Left cardiac atrium (tissue), 4 donors: ENCODE measurements at regions of chr22 and their contacts with region 1.

Region 1: DNA sequence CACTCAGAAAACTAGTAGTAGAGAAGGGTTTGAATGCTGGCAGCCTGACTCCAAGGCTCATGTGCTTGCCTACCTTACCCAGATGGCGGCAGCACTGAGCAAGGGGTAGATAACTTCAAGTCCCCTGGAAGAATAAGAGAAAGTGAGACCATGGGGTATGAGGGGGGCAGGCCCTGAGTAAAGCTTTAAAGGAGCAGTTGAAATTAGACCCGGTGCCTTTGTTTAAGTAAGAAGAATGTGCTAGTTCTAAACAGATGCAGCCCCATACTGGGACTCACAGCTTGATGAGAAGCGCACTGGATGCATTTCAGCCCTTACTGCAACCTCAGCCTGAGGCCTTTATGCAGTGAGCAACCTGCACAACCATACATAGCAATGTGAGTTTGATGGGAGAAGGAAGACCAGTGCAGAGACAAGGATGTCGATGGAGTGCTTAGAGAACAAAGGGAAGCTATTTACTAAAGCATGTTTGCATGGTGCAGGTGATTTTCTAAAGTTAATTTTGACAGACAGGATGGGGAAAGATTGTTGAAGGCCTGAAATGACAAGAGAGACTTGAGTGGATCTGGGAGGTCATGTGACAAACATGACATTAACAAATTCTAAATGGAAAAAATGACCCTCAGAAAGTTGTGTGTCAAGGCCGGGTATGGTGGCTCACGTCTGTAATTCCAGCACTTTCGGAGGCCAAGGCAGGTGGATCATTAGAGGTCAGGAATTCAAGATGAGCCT is 27.1 kb upstream of the TMA7B start:
- DNase-seq: no peak
- ATAC-seq: no peak

Region 2: GRCh38 chr22:39446295-39446721 is 486.8 kb before region 1 on chr22:
- intact Hi-C with region 1: no loop called
- DNase-seq: no peak
- ATAC-seq: peak; percentile 21 to 39

Region 3: GRCh38 chr22:40009292-40009769 is 76.2 kb after region 1 on chr22:
- intact Hi-C with region 1: loop called in 1 of 2 experiments (anchors 10 kb)
- DNase-seq: no peak
- ATAC-seq: no peak